MCF 10A (cell line): ENCODE measurements at regions of chr14 and their contacts with region 1.

Region 1: DNA sequence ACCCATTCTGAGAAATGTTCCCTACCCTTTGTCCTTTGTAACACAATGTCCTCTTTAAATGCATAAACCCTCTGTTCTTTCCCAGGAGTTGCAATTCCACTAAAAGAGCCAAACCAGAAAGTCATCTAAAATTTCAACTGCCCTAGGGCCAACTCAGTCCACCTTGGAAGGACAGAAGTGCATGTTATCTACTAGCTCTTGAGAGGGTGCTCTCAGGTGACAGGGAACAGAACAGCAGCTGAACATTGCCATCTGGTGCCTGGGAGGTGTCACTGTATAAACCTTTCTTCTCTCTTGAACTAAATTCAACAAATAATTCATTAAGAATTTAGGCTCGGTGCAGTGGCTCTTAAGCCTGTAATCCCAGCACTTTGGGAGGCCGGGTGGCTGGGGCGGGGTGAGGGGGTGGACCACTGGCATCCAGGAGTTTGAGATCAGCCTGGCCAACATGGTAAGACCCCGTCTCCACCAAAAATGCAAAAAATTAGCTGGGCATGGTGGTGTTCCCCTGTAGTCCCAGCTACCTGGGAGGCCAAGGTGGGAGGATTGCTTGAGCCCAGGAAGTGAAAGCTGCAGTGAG is 10.3 kb upstream of the FERMT2 start:
- DNase-seq: peak; percentile 75
- H3K4me3 Mint-ChIP-seq: no peak overlapping the region
- H3K27ac Mint-ChIP-seq: no peak overlapping the region
- H3K4me1 Mint-ChIP-seq: peaks cover 11% of the 10 kb centered on the region
- H3K27me3 Mint-ChIP-seq: no peaks in the 10 kb centered on the region
- CTCF ChIP-seq: peak; percentile 64

Region 2: DNA sequence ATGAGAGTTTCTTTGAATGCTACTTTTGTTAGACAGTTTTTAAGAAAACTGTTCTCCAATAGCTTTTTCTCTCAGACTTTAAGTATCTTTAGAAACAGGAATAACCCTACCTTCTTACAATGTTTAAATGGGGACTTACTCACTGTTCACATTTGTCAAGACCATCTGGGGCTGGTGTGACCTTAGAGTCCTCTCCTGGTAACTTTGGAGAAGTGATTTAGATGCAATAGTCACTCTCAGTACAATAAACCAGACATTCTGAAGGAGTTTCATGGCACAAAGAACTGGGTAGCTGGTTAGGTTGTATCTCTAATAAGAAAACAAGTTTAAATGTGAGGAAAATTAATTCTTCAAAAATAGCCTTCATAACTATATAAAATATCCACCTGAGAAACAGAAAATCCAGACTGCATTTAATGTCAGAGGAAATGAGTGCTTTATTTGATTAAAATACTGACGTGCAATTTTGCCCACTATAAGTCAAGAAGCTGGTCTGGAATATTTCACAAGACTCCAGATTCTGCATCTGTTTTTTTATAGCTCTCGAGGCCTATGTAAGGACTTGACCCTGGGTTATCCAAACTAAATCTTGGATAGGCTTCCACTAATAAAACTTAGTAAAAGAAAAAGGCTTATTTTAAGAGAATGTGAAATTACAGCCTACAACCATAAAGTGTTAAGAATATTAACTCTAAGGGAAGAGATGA is 538.3 kb before region 1 on chr14:
- CTCF ChIA-PET with region 1: no interaction called
- POLR2A ChIA-PET with region 1: no interaction called
- intact Hi-C with region 1: no loop called
- DNase-seq: no peak
- H3K4me3 Mint-ChIP-seq: no peak overlapping the region
- H3K27ac Mint-ChIP-seq: no peak overlapping the region
- H3K4me1 Mint-ChIP-seq: no peaks in the 10 kb centered on the region
- H3K27me3 Mint-ChIP-seq: no peaks in the 10 kb centered on the region
- CTCF ChIP-seq: no peak

Region 3: DNA sequence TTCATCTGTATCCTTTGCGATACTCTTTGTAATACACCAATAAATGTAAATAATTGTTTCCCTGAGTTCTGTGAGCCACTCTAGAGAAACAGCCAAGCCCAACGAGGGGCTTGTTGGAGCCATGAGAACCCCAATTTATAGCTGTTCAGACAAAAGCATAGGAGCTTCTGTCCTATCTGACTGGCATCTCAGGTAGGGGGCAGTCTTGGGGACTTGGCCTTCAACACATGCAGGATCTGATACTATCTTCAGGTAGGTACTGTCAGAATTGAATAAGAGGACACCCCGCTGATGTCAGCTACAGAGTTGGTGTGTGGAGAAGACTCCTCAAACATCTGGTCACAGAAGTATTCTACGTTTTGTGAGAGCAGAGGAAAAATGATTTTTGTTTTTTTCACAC is 434.1 kb before region 1 on chr14:
- CTCF ChIA-PET with region 1: no interaction called
- POLR2A ChIA-PET with region 1: no interaction called
- intact Hi-C with region 1: no loop called
- DNase-seq: no peak
- H3K4me3 Mint-ChIP-seq: no peak overlapping the region
- H3K27ac Mint-ChIP-seq: no peak overlapping the region
- H3K4me1 Mint-ChIP-seq: no peaks in the 10 kb centered on the region
- H3K27me3 Mint-ChIP-seq: no peaks in the 10 kb centered on the region
- CTCF ChIP-seq: no peak

Region 4: DNA sequence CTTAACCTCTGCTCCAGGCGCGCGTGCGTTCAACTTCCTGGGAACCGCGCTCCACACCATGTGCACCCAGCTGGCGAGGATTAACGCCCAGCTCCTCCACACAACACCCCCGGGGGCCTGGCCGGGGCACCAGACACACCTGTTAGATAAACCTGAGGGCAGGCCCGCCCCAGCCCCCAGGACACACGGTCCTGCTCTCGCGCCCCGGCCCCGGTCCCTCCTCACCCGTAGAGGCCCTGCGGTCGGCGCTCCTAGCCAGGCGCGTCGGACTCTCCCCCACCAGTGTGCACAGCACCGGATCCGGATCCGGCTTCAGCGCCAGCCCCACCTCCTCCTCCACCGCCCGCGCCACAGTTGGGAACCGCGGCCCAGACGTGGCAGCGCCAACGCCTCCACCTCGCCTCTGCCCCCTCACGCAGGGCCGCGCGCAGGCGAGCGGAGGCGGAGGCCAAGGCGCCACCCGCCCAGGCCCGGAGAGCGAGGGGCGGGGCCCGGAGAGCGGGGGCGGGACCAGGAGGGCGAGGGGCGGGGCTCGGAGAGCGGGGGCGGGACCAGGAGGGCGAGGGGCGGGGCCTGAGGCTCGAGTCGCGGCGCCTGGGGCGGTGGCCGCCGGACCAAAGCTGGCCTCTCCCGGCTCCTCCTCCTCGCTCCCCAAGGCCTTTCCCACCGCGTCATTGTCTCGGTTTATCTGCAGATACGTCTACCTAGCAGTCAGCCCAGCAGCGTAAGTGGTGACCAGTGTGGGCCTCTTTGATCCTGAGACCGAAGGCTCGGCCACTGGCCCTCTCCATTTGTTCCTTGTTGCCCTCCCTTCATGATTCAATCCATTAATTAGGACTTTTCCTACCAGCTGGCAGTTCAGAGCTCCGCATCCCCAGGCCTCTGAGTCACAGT is 169.7 kb before region 1 on chr14 and contains the start of gene GNPNAT1:
- CTCF ChIA-PET with region 1: no interaction called
- POLR2A ChIA-PET with region 1: no interaction called
- intact Hi-C with region 1: no loop called
- DNase-seq: peak; percentile 94
- H3K4me3 Mint-ChIP-seq: peak within 1 kb of the TSS; percentile 93
- H3K27ac Mint-ChIP-seq: peak within 1 kb of the TSS; percentile 98
- H3K4me1 Mint-ChIP-seq: peaks cover 23% of the 10 kb centered on the region
- H3K27me3 Mint-ChIP-seq: no peaks in the 10 kb centered on the region
- CTCF ChIP-seq: no peak
- total RNA-seq, gene GNPNAT1: 39.2 and 58.8 TPM in 2 replicates

Region 5: GRCh38 chr14:52824507-52824906 is 136.6 kb before region 1 on chr14:
- CTCF ChIA-PET with region 1: interaction called, 135 read pairs
- POLR2A ChIA-PET with region 1: interaction called, 12 read pairs
- intact Hi-C with region 1: loop called (anchors 1 kb)
- DNase-seq: no peak
- H3K4me3 Mint-ChIP-seq: no peak overlapping the region
- H3K27ac Mint-ChIP-seq: no peak overlapping the region
- H3K4me1 Mint-ChIP-seq: no peaks in the 10 kb centered on the region
- H3K27me3 Mint-ChIP-seq: no peaks in the 10 kb centered on the region
- CTCF ChIP-seq: no peak

Region 6: GRCh38 chr14:53064461-53064860 is 103.3 kb after region 1 on chr14:
- CTCF ChIA-PET with region 1: no interaction called
- POLR2A ChIA-PET with region 1: no interaction called
- intact Hi-C with region 1: no loop called
- DNase-seq: no peak
- H3K4me3 Mint-ChIP-seq: no peak overlapping the region
- H3K27ac Mint-ChIP-seq: no peak overlapping the region
- H3K4me1 Mint-ChIP-seq: no peaks in the 10 kb centered on the region
- H3K27me3 Mint-ChIP-seq: no peaks in the 10 kb centered on the region
- CTCF ChIP-seq: no peak